Ascending aorta (tissue), 2 donors: ENCODE measurements at regions of chr16 and their contacts with region 1.

Region 1: DNA sequence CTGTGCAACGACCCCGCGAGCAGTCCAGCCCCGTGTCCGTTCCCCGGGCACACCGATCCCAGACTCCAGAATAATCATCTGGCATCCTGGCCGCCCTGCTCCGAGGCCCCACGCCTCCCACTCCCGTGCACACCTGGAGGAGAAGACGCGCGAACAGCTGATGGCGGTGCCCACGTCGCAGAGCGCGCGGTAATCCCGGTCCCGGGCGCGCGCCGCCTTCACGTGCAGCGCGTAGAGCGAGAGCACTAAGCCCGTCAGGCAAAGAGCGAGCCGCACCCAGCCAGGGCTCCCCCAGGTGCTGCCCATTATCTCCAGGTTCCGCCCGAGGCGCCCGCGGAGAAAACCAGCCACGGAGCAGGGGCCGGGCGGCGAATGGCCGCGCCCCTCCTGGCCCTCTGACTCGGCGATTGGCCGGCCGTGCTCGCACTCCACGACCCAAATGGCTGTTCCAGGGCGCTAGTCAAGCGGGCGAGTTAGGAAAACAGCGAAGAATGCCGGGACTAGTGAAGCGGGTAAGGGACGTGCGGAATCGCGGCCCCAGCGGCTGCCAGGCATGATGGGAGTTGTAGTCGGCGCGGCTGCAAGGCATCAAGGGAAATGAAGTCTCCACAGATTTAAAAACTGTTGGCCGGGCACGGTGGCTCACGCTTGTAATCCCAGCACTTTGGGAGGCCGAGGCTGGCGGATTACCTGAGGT is at the start of gene VKORC1:
- DNase-seq: peak; percentile 88 to 98
- H3K4me3 ChIP-seq: peak within 1 kb of the TSS; percentile 94 to 97
- H3K27ac ChIP-seq: peak within 1 kb of the TSS; percentile 86 to 92
- H3K4me1 ChIP-seq: peaks cover 0 to 3% of the 10 kb centered on the region in 2 donors
- H3K27me3 ChIP-seq: no peaks in the 10 kb centered on the region
- CTCF ChIP-seq: no peak
- total RNA-seq, gene VKORC1: 227 TPM

Region 2: GRCh38 chr16:30997000-30997886 is 97.3 kb before region 1 on chr16:
- intact Hi-C with region 1: loop called (anchors 5 kb)
- DNase-seq: peak in 1 of 2 donors; percentile 90
- H3K4me3 ChIP-seq: peak overlapping the region; percentile 65 to 78
- H3K27ac ChIP-seq: peak overlapping the region; percentile 90 to 94
- H3K4me1 ChIP-seq: peaks cover 9 to 27% of the 10 kb centered on the region in 2 donors
- H3K27me3 ChIP-seq: no peaks in the 10 kb centered on the region
- CTCF ChIP-seq: no peak

Region 3: GRCh38 chr16:31032736-31033708 is 61.5 kb before region 1 on chr16 and contains the start of gene STX4:
- intact Hi-C with region 1: loop called (anchors 1 kb)
- DNase-seq: peak; percentile 88 to 99
- H3K4me3 ChIP-seq: peak within 1 kb of the TSS; percentile 83 to 99
- H3K27ac ChIP-seq: peak within 1 kb of the TSS; percentile 92 to 99
- H3K4me1 ChIP-seq: peaks cover 3 to 10% of the 10 kb centered on the region in 2 donors
- H3K27me3 ChIP-seq: no peaks in the 10 kb centered on the region
- CTCF ChIP-seq: no peak
- total RNA-seq, gene STX4: 79.1 TPM

Region 4: DNA sequence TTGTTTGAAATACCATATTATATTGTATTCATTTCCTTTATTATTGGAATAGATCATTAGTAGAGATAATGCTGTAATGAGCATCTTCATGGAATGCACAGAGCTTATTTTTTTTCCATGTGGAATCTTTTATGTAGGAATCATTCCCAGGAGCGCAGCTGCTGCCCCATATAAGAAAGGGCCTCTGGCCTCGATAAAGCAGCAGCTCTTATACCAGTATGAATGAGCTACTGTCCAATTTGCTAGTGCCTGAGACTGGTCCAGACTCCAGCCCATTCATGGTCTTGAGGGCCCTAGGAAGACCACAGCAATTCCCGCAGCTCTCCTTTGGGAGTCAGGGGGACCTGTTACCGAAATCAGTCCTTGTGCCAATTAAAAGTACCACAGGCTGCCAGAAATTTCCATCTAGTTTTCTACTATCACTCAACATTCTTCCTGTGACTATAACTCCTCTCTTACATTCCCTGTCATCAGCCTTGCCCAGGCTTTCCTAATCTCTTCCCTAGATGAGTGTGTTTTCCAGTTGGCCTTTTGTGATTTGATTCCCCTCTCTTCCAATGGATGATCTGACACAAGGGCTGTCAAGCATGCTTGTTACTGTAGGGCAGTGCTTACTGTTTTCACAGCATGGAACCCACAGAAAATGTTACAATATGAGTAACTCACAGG is 346.1 kb after region 1 on chr16:
- intact Hi-C with region 1: loop called (anchors 10 kb)
- DNase-seq: no peak
- H3K4me3 ChIP-seq: no peak overlapping the region
- H3K27ac ChIP-seq: no peak overlapping the region
- H3K4me1 ChIP-seq: no peaks in the 10 kb centered on the region
- H3K27me3 ChIP-seq: no peaks in the 10 kb centered on the region
- CTCF ChIP-seq: no peak